ENCODE measurements at regions of chr6 and their contacts with region 1.

Region 1: DNA sequence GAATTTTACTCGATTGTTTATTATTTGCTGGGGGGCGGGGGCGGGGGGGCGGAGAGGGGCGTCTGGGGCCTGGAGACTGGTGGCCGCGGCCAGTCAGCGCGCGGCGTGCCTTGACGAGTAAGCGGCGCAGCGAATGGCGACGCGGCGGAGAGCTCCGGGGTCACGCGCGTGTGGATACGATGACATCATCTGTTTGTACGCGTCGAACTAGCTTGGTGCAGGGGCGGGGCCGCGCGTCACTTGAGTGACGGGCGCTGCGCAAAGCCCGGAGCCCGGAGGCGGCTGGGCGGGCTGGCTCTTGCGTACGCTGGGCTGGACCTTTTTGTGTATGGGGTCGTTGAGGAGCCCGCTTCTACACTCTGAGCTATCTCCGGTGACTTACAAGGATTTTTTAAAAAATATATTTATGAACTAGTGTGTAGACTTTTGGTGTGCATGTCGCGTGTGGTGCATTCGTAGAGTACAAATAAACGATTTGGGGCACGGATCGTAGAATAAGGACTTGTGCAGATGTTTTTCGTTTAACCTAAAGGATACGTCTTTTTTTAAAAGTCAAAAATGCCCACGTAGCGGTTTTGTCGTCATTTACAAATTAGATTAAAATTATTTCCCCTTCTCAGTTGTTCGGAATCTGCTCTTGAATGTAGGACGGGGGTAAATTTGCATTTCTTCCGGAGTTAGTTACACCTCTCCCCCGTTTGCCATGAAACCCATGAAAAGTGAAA is 2.2 kb upstream of the FOXO3 start:
- DNase-seq: peak; percentile 93
- ATAC-seq: peak; percentile 65
- H3K4me3 Mint-ChIP-seq: peak overlapping the region; percentile 95
- H3K27ac Mint-ChIP-seq: peak overlapping the region; percentile 97
- H3K4me1 Mint-ChIP-seq: peaks cover 24% of the 10 kb centered on the region
- H3K27me3 Mint-ChIP-seq: peaks cover 8% of the 10 kb centered on the region
- CTCF ChIP-seq: no peak

Region 2: GRCh38 chr6:107957909-107958688 is 600.4 kb before region 1 on chr6 and contains the start of gene SEC63:
- CTCF ChIA-PET with region 1: no interaction called
- POLR2A ChIA-PET with region 1: interaction called, 4 read pairs
- intact Hi-C with region 1: loop called (anchors 1 kb)
- DNase-seq: peak; percentile 95
- ATAC-seq: peak; percentile 97
- H3K4me3 Mint-ChIP-seq: peak within 1 kb of the TSS; percentile 98
- H3K27ac Mint-ChIP-seq: peak within 1 kb of the TSS; percentile 94
- H3K4me1 Mint-ChIP-seq: peaks cover 27% of the 10 kb centered on the region
- H3K27me3 Mint-ChIP-seq: no peaks in the 10 kb centered on the region
- CTCF ChIP-seq: no peak
- total RNA-seq, gene SEC63: 64.4 and 68.3 TPM in 2 replicates

Region 3: GRCh38 chr6:108798670-108799353 is 240.3 kb after region 1 on chr6:
- CTCF ChIA-PET with region 1: no interaction called
- POLR2A ChIA-PET with region 1: interaction called, 3 read pairs
- intact Hi-C with region 1: loop called (anchors 5 kb)
- DNase-seq: no peak
- ATAC-seq: no peak
- H3K4me3 Mint-ChIP-seq: no peak overlapping the region
- H3K27ac Mint-ChIP-seq: no peak overlapping the region
- H3K4me1 Mint-ChIP-seq: peaks cover 12% of the 10 kb centered on the region
- H3K27me3 Mint-ChIP-seq: peaks cover 11% of the 10 kb centered on the region
- CTCF ChIP-seq: no peak

Region 4: DNA sequence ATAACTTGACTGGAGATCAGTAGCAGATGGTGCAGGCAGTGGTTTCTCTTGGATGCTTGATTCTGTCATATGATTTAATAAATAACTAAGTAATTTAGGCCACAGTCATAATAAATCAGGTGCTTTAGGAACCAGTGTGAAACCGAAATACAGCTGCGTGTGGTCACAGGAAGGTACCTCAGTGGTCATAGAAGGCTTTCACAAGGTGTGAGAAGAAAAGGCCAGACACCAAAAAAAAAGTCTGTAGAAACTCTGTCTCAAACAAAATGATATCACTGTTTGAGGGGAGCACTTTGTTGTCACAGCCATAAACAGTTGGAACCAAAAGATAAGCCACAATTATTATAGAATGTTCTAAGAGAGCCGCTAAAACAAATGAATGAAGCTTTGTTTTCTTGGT is 346.2 kb after region 1 on chr6:
- CTCF ChIA-PET with region 1: no interaction called
- POLR2A ChIA-PET with region 1: interaction called, 6 read pairs
- intact Hi-C with region 1: loop called (anchors 5 kb)
- DNase-seq: no peak
- ATAC-seq: peak; percentile 81
- H3K4me3 Mint-ChIP-seq: peak overlapping the region; percentile 4
- H3K27ac Mint-ChIP-seq: peak overlapping the region; percentile 68
- H3K4me1 Mint-ChIP-seq: peaks cover 51% of the 10 kb centered on the region
- H3K27me3 Mint-ChIP-seq: no peaks in the 10 kb centered on the region
- CTCF ChIP-seq: no peak

Region 5: DNA sequence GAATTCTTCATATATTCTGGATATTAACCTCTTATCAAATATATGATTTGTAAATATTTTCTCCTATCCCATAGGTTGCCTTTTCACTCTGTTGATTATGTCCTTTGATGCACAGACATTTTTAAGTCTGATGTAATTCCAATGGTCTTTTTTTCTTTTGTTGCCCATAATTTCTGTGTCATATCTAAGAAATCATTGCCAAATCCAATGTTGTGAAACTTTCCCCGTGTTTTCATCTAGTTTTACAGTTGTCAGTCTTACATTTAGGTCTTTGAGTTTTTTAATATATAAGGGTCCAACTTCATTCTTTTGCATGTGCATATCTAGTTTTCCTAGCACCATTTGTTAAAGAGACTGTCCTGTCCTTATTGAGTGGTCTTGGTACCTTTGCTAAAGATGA is 424.6 kb after region 1 on chr6:
- CTCF ChIA-PET with region 1: no interaction called
- POLR2A ChIA-PET with region 1: no interaction called
- intact Hi-C with region 1: no loop called
- DNase-seq: no peak
- ATAC-seq: no peak
- H3K4me3 Mint-ChIP-seq: no peak overlapping the region
- H3K27ac Mint-ChIP-seq: no peak overlapping the region
- H3K4me1 Mint-ChIP-seq: no peaks in the 10 kb centered on the region
- H3K27me3 Mint-ChIP-seq: no peaks in the 10 kb centered on the region
- CTCF ChIP-seq: no peak

Region 6: GRCh38 chr6:109440331-109441068 is 882.0 kb after region 1 on chr6 and contains the starts of genes PPIL6 and SMPD2:
- CTCF ChIA-PET with region 1: no interaction called
- POLR2A ChIA-PET with region 1: interaction called, 3 read pairs
- intact Hi-C with region 1: loop called (anchors 1 kb)
- DNase-seq: peak; percentile 89
- ATAC-seq: peak; percentile 83
- H3K4me3 Mint-ChIP-seq: peak within 1 kb of the TSS; percentile 96
- H3K27ac Mint-ChIP-seq: peak within 1 kb of the TSS; percentile 95
- H3K4me1 Mint-ChIP-seq: peaks cover 34% of the 10 kb centered on the region
- H3K27me3 Mint-ChIP-seq: no peaks in the 10 kb centered on the region
- CTCF ChIP-seq: no peak
- total RNA-seq, gene PPIL6: 0.73 and 0.91 TPM in 2 replicates
- total RNA-seq, gene SMPD2: 24.9 and 28.2 TPM in 2 replicates

Region 7: DNA sequence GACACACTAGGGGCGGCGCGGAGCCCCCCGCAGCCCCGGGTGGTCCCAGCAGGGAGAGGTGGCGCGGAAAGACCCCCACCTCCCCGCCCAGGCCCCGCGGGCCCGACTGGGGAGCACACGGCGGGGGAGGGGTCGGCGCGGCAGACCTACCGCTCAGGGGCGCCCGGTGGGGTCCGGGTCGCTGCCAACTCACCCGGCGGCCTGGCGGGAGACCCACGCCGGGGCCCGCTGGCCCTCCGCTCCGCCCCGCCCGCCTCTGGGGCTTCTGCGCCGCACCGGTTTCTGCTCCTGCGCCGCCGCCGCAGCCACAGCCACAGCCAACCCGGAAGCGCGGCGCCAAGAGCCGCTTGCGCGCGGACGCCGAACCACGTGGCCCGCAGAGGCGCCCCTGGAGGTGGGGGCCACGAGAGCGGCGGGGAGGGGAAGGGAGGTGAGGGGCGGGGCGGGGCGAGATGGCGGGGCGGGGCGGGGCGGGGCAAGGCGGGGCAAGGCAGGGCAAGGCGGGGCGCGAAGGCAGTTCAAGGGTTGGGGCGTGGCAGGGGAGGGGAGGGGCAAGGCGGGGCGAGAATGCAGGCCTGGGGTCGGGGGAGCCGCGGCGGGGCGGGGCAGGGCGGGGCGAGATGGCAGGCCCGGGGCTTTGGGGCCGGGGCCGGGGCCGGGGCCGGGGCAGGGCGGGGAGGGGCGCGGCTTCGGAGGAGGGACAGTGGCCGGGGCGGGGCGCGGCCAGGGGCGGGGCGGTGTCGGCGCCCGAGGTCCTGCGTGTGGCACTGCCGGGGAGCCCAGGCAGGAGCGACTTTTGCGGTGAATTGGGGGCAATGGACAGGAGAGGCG is 924.6 kb after region 1 on chr6 and contains the start of gene ZBTB24:
- CTCF ChIA-PET with region 1: no interaction called
- POLR2A ChIA-PET with region 1: no interaction called
- intact Hi-C with region 1: loop called (anchors 10 kb)
- DNase-seq: peak; percentile 81
- ATAC-seq: peak; percentile 82
- H3K4me3 Mint-ChIP-seq: peak within 1 kb of the TSS; percentile 95
- H3K27ac Mint-ChIP-seq: peak within 1 kb of the TSS; percentile 85
- H3K4me1 Mint-ChIP-seq: peaks cover 52% of the 10 kb centered on the region
- H3K27me3 Mint-ChIP-seq: no peaks in the 10 kb centered on the region
- CTCF ChIP-seq: no peak
- total RNA-seq, gene ZBTB24: 22.8 and 25.4 TPM in 2 replicates

Measured in activated B cell treated with CpG ODN at 0.5 μM for 24 hours (primary cell).